Heart right ventricle (tissue), 16 donors: ENCODE measurements at regions of chr17 and their contacts with region 1.

Region 1: GRCh38 chr17:58417300-58418092 is at the start of gene RNF43:
- DNase-seq: peak; percentile 64 to 84
- ATAC-seq: peak; percentile 97 to 100 (median 98)
- H3K4me3 ChIP-seq: peak within 1 kb of the TSS in 9 of 10 donors; percentile 20 to 48 (median 42)
- H3K27ac ChIP-seq: peak within 1 kb of the TSS in 9 of 10 donors; percentile 9 to 70 (median 38)
- H3K4me1 ChIP-seq: peaks cover 0 to 11% (median 0%) of the 10 kb centered on the region in 9 donors
- H3K27me3 ChIP-seq: peaks cover 0 to 20% (median 9%) of the 10 kb centered on the region in 7 donors
- CTCF ChIP-seq: peak; percentile 45 to 76 (median 67)
- total RNA-seq, gene RNF43: 1.5 to 6.1 (median 3.7) TPM

Region 2: GRCh38 chr17:57946798-57947358 is 470.6 kb before region 1 on chr17:
- intact Hi-C with region 1: no loop called
- DNase-seq: peak; percentile 32 to 57
- ATAC-seq: peak; percentile 46 to 82 (median 70)
- H3K4me3 ChIP-seq: peak overlapping the region in 9 of 10 donors; percentile 26 to 54 (median 50)
- H3K27ac ChIP-seq: peak overlapping the region; percentile 57 to 100 (median 83)
- H3K4me1 ChIP-seq: peaks cover 40 to 98% (median 88%) of the 10 kb centered on the region in 9 donors
- H3K27me3 ChIP-seq: no peaks in the 10 kb centered on the region
- CTCF ChIP-seq: no peak

Region 3: GRCh38 chr17:58249270-58250133 is 168.0 kb before region 1 on chr17:
- intact Hi-C with region 1: loop called in 1 of 10 experiments (anchors 10 kb)
- DNase-seq: peak; percentile 51 to 72
- ATAC-seq: peak; percentile 89 to 93 (median 91)
- H3K4me3 ChIP-seq: peak overlapping the region; percentile 26 to 56 (median 44)
- H3K27ac ChIP-seq: no peak overlapping the region
- H3K4me1 ChIP-seq: peaks cover 0 to 11% (median 8%) of the 10 kb centered on the region in 9 donors
- H3K27me3 ChIP-seq: peaks cover 0 to 83% (median 62%) of the 10 kb centered on the region in 7 donors
- CTCF ChIP-seq: peak; percentile 89 to 98 (median 96)

Region 4: DNA sequence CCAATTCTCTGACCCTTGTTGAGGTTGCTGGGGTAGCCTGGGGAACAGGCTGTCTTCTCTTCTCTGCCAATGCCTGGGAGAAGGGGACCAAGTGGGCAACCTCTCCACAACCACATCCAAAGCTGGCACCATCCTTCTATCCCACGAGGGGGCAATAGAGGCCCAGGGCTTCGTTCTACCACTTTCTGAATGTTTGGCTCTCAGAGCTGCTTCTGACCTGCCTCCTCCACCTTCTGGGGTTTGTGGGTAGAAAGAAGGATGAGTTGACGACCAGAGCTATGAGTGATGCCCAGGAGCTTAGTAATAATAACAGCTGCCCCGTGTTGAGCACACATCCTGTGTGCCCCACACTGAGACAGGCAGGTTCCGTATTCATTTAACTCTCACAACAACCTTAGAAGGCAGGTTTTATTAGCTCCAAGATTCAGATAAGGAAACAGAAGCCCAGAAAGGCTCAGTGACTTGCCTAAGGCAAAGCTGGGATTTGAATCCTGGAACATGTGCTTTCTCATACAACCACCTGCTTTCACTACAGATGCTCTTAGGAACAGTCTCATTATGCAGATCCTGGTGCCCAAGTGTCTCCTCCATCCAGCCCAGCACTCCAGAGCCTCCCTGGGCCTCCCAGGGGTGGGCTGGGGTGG is 100.0 kb before region 1 on chr17:
- intact Hi-C with region 1: loop called in 2 of 10 experiments (anchors 5 to 10 kb)
- DNase-seq: no peak
- ATAC-seq: peak in 5 of 8 donors; percentile 40 to 65 (median 45)
- H3K4me3 ChIP-seq: no peak overlapping the region
- H3K27ac ChIP-seq: peak overlapping the region in 1 of 10 donors; percentile 44
- H3K4me1 ChIP-seq: peaks cover 0 to 5% (median 0%) of the 10 kb centered on the region in 9 donors
- H3K27me3 ChIP-seq: peaks cover 0 to 3% (median 0%) of the 10 kb centered on the region in 7 donors
- CTCF ChIP-seq: peak in 7 of 9 donors; percentile 38 to 76 (median 52)

Region 5: DNA sequence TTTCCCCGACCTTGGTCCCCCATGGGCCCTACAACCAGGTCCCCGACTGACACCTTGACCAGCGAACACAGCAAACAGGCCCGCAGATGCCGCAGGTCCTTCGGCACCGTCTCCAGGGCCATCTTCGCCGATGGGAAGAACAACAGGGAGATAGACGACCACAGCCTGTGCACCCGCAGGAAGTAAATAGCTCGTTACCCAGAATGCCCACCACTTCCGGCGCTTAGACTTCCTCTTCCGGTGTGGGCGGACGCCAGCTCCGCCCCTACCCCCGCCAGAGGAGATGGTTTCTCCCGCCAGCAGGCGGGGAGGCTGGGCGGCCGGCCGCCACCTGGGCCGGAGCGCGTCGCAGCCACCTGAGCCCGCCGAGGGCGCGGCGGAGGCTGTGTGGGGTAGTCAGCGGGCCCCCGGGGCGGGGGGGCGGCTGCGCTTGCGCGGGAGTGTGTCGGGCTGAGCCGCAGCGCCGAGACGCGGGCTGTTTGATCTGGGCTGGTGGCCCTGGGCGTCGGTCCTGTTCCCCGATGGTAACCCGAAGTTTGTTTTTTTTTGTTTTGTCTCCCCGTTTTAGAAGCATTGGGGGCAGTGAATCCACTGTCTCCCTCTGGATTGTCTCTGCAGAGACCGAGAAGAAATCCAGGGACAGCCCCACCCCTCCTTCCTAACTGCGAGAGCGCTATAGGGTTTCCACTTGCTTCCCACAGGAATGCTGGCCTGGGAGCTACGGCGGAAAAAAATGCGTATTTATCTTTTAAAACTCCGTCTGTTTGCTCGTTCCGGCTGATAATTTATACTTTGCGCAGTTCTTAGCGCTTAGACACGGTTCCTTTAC is 65.3 kb before region 1 on chr17 and contains the start of gene SUPT4H1:
- intact Hi-C with region 1: loop called in 5 of 10 experiments (anchors 1 to 5 kb)
- DNase-seq: peak; percentile 87 to 88
- ATAC-seq: peak; percentile 97 to 98 (median 98)
- H3K4me3 ChIP-seq: peak within 1 kb of the TSS; percentile 73 to 96 (median 82)
- H3K27ac ChIP-seq: peak within 1 kb of the TSS; percentile 83 to 98 (median 94)
- H3K4me1 ChIP-seq: peaks cover 0 to 35% (median 17%) of the 10 kb centered on the region in 9 donors
- H3K27me3 ChIP-seq: no peaks in the 10 kb centered on the region
- CTCF ChIP-seq: peak in 3 of 9 donors; percentile 8 to 30 (median 15)
- total RNA-seq, gene SUPT4H1: 49.0 to 73.4 (median 59.8) TPM